ENCODE measurements at regions of chr7 and their contacts with region 1.

Region 1: DNA sequence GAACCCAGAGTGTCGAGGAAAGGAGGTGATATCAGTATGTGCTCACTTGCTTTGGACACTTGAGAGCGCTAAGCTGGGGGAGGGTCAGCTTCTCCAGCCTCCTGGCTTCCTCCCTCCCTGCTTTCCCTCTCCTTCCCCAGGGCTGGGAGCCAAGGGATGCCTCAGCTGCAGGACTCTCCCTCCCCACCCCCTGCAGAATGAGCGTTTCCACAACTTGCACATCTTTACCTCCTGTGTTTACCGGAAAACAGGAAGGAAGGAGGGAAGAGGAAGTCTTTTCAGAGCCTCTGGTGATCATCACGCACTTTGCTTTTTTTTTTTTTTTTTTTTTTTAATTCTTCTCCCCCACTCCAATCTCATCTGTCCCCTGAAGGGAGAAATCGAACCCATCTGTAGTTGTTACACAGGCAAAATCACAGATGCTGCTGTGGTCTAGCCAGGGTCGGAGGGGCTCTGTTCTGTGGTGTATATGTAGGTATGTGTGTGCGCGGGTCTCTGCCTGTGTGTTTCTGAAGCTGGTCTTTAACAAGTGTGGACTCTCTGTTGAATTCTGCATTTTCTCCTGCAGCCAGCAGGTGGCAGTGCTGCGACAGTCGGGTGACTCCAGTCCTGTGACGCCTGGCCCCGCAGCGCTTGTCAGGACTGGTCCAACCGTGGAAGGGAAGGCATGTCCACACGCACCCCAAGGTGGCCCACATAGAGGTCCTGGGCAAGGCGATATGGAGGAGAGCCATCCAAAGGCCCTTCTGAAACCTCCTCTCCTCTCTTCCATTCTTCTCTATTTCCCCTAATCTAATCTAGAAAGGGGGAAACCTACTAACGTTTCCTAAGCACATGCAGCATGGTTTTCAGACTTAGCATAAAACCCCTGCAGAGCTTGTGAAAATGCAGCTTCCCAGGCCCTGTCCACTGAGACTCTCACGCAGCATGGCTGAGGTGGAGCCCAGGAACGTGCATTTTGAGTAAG is 257.6 kb downstream of the PLXNA4 start:
- DNase-seq: peak; percentile 63 to 94 (median 83)
- ATAC-seq: peak; percentile 95 to 99 (median 98)
- H3K4me3 ChIP-seq: no peak overlapping the region
- H3K27ac ChIP-seq: no peak overlapping the region
- H3K4me1 ChIP-seq: no peaks in the 10 kb centered on the region
- H3K27me3 ChIP-seq: no peaks in the 10 kb centered on the region
- CTCF ChIP-seq: peak; percentile 67 to 87 (median 74)

Region 2: GRCh38 chr7:132177708-132178399 is 140.8 kb before region 1 on chr7:
- intact Hi-C with region 1: no loop called
- DNase-seq: no peak
- ATAC-seq: no peak
- H3K4me3 ChIP-seq: no peak overlapping the region
- H3K27ac ChIP-seq: no peak overlapping the region
- H3K4me1 ChIP-seq: no peaks in the 10 kb centered on the region
- H3K27me3 ChIP-seq: no peaks in the 10 kb centered on the region
- CTCF ChIP-seq: no peak

Region 3: GRCh38 chr7:132276976-132277725 is 41.5 kb before region 1 on chr7:
- intact Hi-C with region 1: no loop called
- DNase-seq: no peak
- ATAC-seq: no peak
- H3K4me3 ChIP-seq: no peak overlapping the region
- H3K27ac ChIP-seq: no peak overlapping the region
- H3K4me1 ChIP-seq: no peaks in the 10 kb centered on the region
- H3K27me3 ChIP-seq: no peaks in the 10 kb centered on the region
- CTCF ChIP-seq: no peak

Region 4: DNA sequence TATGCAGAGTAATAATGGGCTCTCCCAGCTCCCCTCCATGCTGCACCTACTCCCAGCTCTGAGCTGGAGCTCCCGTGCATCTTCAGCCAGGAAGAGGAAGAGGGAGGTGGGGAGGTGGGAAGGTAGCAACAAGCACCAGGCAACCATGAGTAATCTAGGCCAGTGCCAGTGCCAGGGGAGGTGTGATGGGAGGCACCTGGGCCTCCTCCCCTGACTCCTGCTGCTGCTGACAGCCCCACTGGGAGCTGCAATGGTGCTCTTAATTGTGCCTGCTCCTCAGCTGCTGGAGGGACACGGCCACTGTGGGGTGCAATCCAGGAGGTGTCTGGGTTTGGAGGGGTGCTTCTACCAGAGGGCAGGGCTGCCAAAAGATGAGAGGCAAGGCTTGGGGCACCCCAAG is 14.7 kb after region 1 on chr7:
- intact Hi-C with region 1: no loop called
- DNase-seq: no peak
- ATAC-seq: no peak
- H3K4me3 ChIP-seq: no peak overlapping the region
- H3K27ac ChIP-seq: no peak overlapping the region
- H3K4me1 ChIP-seq: no peaks in the 10 kb centered on the region
- H3K27me3 ChIP-seq: no peaks in the 10 kb centered on the region
- CTCF ChIP-seq: no peak

Region 5: GRCh38 chr7:132580717-132581285 is 262.2 kb after region 1 on chr7:
- intact Hi-C with region 1: loop called in 2 of 3 experiments (anchors 5 kb)
- DNase-seq: peak; percentile 46 to 73 (median 62)
- ATAC-seq: peak; percentile 51 to 85 (median 80)
- H3K4me3 ChIP-seq: no peak overlapping the region
- H3K27ac ChIP-seq: no peak overlapping the region
- H3K4me1 ChIP-seq: peaks cover 0 to 3% (median 0%) of the 10 kb centered on the region in 3 donors
- H3K27me3 ChIP-seq: peaks cover 0 to 2% (median 0%) of the 10 kb centered on the region in 4 donors
- CTCF ChIP-seq: peak; percentile 31 to 75 (median 68)

Measured in pancreas (tissue), 10 donors.